ENCODE measurements at regions of chr14 and their contacts with region 1.

Region 1: DNA sequence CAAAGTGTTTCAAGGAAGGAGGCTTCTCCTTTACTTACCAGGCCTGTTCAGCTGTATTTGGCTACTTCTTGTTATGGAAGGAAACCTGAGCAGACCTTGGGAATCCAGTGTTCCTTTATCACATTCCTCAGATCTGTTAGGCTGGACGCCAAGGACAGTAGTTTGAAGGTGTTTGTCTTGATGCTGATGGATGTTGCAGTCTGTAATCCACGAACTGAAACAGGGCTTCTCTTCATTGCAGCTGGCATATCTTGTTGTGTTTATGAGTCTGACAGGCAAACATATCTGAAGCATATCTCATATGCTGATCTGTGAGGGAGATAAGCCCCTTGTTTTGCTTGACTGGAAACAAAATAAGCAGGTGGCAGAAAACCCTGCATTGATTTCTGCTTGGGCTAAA is 904.3 kb downstream of the NRXN3 start:
- DNase-seq: no peak
- H3K4me3 ChIP-seq: no peak overlapping the region
- H3K27ac ChIP-seq: no peak overlapping the region
- H3K4me1 ChIP-seq: no peaks in the 10 kb centered on the region
- H3K27me3 ChIP-seq: no peaks in the 10 kb centered on the region
- CTCF ChIP-seq: no peak
- EP300 ChIP-seq: no peak
- POLR2A ChIP-seq: no peak

Region 2: DNA sequence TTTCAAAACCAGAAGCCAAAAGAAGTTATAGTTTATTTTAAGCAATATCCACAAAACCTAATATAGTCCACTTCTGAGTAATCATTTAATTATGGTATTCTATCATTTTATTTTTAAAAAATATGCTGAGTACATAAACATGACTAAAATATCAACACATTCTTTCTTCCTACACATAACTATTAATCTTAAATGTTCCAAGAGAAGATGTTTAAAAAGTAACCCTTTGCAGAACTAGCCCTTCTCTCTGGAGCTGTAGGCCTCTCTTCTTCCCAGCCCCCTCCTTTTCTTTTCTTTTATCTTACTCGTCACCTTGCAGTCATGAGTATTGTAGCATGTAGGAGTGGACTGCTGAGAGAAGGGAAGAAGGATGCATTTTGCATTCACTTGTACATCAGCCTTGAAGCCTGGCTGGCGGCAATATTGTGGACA is 37.5 kb after region 1 on chr14:
- intact Hi-C with region 1: loop called in 1 of 4 experiments (anchors 1 kb)
- DNase-seq: no peak
- H3K4me3 ChIP-seq: no peak overlapping the region
- H3K27ac ChIP-seq: no peak overlapping the region
- H3K4me1 ChIP-seq: no peaks in the 10 kb centered on the region
- H3K27me3 ChIP-seq: no peaks in the 10 kb centered on the region
- CTCF ChIP-seq: no peak
- EP300 ChIP-seq: no peak
- POLR2A ChIP-seq: no peak